ENCODE measurements at regions of chr4 and their contacts with region 1.

Region 1: DNA sequence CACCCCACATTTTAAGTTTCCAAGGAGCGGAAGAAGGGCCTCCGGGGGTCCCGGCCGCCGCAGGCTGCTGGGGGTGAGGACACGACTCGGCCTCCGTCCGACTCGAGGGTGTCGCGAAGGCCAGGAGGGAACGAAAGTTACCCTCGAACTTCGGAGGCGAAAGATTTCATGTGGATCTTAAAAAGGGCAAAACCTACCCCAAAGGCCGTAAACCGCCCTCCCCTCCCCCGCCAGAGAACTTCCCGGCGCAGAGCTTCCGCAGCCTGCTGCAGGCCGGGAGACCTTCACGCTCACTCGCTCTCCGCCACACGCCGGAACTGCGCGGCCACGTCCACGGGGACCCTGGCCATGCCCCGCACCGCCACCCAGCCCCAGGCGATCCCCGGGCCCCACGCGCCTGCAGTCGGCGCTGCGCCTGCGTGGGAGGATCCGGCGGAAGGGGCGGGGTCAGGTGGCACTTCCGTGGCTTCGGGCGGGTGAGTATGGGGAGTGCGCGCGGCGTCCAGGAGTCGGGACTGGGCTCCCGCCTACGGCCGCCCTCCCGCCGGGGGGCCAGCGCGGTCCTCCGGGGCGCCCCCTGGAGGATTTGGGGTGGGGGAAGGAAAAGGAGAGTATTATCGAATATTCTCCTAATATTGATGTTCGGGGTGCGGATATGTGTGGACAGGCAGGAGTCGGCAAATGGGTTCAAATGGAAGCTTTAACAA is at the start of gene MMAA:
- DNase-seq: peak; percentile 91 to 95 (median 93)
- H3K4me3 ChIP-seq: peak within 1 kb of the TSS; percentile 85 to 97
- H3K4me3 Mint-ChIP-seq: peak within 1 kb of the TSS; percentile 87 to 100 (median 98)
- H3K27ac ChIP-seq: peak within 1 kb of the TSS; percentile 95
- H3K27ac Mint-ChIP-seq: peak within 1 kb of the TSS; percentile 98 to 100 (median 99)
- H3K4me1 ChIP-seq: peaks cover 32% of the 10 kb centered on the region
- H3K4me1 Mint-ChIP-seq: peaks cover 31 to 54% (median 36%) of the 10 kb centered on the region in 4 donors
- H3K27me3 ChIP-seq: no peaks in the 10 kb centered on the region
- H3K27me3 Mint-ChIP-seq: peaks cover 0 to 1% of the 10 kb centered on the region in 2 donors
- total RNA-seq, gene MMAA: 11.8 to 12.0 TPM

Region 2: DNA sequence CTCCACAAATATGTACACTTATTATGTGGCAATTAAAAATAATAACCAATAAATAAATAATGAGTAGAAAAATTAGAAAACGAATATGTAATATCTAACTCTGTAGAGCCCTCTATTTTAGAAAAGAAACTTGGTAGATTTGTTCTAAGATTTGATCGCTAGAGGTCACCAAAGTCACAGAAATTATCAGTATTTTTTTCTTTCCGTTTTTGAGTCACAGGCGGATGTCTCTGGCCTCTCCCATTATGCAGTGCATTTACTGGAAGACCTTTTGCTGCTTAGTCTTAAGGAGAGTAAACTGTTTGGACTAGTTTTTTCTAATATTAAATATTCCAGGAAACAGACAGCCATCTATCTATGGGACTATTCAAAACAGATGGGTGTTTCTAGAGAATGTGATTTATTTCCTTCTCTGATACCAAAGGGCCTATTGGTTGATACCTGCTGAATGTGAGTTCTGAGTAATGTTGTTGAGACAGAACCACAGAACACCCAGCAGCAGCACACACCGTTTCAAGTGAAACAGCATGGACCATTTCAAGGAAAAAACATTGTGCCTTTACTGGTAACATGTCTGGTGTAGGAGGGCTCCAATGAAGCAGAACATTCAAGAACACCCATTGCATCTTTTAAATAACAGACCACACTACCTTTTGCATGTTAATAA is 1444.6 kb before region 1 on chr4:
- CTCF ChIA-PET with region 1: interaction called, 4 read pairs
- POLR2A ChIA-PET with region 1: no interaction called
- intact Hi-C with region 1: loop called (anchors 2 kb)
- DNase-seq: peak; percentile 29 to 48 (median 41)
- H3K4me3 ChIP-seq: no peak overlapping the region
- H3K4me3 Mint-ChIP-seq: no peak overlapping the region
- H3K27ac ChIP-seq: no peak overlapping the region
- H3K27ac Mint-ChIP-seq: no peak overlapping the region
- H3K4me1 ChIP-seq: no peaks in the 10 kb centered on the region
- H3K4me1 Mint-ChIP-seq: peaks cover 0 to 6% (median 3%) of the 10 kb centered on the region in 4 donors
- H3K27me3 ChIP-seq: no peaks in the 10 kb centered on the region
- H3K27me3 Mint-ChIP-seq: peaks cover 7 to 9% of the 10 kb centered on the region in 2 donors

Region 3: GRCh38 chr4:145154573-145154972 is 464.5 kb before region 1 on chr4:
- CTCF ChIA-PET with region 1: interaction called, 3 read pairs
- POLR2A ChIA-PET with region 1: no interaction called
- intact Hi-C with region 1: loop called (anchors 2 kb)
- DNase-seq: no peak
- H3K4me3 ChIP-seq: no peak overlapping the region
- H3K4me3 Mint-ChIP-seq: no peak overlapping the region
- H3K27ac ChIP-seq: no peak overlapping the region
- H3K27ac Mint-ChIP-seq: peak overlapping the region in 1 of 7 donors; percentile 34
- H3K4me1 ChIP-seq: no peaks in the 10 kb centered on the region
- H3K4me1 Mint-ChIP-seq: peaks cover 0 to 9% (median 4%) of the 10 kb centered on the region in 4 donors
- H3K27me3 ChIP-seq: no peaks in the 10 kb centered on the region
- H3K27me3 Mint-ChIP-seq: no peaks in the 10 kb centered on the region

Region 4: DNA sequence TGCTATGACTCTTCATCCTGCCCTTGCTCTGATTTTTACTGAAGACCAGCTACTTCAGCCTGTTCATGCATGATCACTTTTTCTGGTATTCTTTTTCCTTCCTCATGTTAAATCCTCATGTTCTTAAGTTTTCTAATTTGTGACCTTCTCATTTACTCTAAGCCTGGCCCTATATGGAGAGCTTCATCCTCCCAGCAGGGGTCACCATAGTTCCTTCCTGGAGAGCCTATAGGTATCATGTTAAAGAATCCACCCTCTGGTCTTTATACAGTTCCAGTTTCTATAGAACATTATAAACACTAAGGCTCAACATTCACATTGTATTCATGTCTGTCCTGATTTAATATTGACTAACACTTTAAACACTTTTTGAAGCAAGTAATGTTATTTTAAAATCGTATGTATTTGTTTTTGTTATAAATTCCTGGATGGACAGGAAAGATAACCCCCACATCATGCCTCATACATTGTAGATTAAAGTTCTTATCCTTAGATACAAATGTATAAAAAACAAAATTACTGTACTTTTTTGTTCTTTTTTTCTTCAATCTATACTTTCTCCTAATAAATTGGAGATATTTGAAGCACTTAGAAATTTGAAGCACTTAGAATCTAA is 384.9 kb before region 1 on chr4:
- CTCF ChIA-PET with region 1: interaction called, 29 read pairs
- POLR2A ChIA-PET with region 1: no interaction called
- intact Hi-C with region 1: no loop called
- DNase-seq: peak; percentile 31 to 55 (median 43)
- H3K4me3 ChIP-seq: no peak overlapping the region
- H3K4me3 Mint-ChIP-seq: no peak overlapping the region
- H3K27ac ChIP-seq: no peak overlapping the region
- H3K27ac Mint-ChIP-seq: no peak overlapping the region
- H3K4me1 ChIP-seq: no peaks in the 10 kb centered on the region
- H3K4me1 Mint-ChIP-seq: no peaks in the 10 kb centered on the region
- H3K27me3 ChIP-seq: no peaks in the 10 kb centered on the region
- H3K27me3 Mint-ChIP-seq: peaks cover 0 to 10% of the 10 kb centered on the region in 2 donors

Region 5: GRCh38 chr4:145732895-145733880 is 114.1 kb after region 1 on chr4:
- CTCF ChIA-PET with region 1: no interaction called
- POLR2A ChIA-PET with region 1: no interaction called
- intact Hi-C with region 1: loop called (anchors 1 kb)
- DNase-seq: peak; percentile 67 to 83 (median 69)
- H3K4me3 ChIP-seq: peak overlapping the region in 1 of 2 donors; percentile 45
- H3K4me3 Mint-ChIP-seq: peak overlapping the region; percentile 76 to 84 (median 81)
- H3K27ac ChIP-seq: peak overlapping the region; percentile 13
- H3K27ac Mint-ChIP-seq: peak overlapping the region in 5 of 7 donors; percentile 18 to 87 (median 52)
- H3K4me1 ChIP-seq: peaks cover 5% of the 10 kb centered on the region
- H3K4me1 Mint-ChIP-seq: peaks cover 4 to 31% (median 10%) of the 10 kb centered on the region in 4 donors
- H3K27me3 ChIP-seq: no peaks in the 10 kb centered on the region
- H3K27me3 Mint-ChIP-seq: peaks cover 9 to 10% of the 10 kb centered on the region in 2 donors

Region 6: GRCh38 chr4:146175541-146176453 is 556.7 kb after region 1 on chr4 and contains the start of gene LSM6:
- CTCF ChIA-PET with region 1: no interaction called
- POLR2A ChIA-PET with region 1: no interaction called
- intact Hi-C with region 1: loop called (anchors 5 kb)
- DNase-seq: peak; percentile 83 to 87 (median 84)
- H3K4me3 ChIP-seq: peak within 1 kb of the TSS; percentile 39 to 96
- H3K4me3 Mint-ChIP-seq: peak within 1 kb of the TSS; percentile 86 to 96 (median 92)
- H3K27ac ChIP-seq: peak within 1 kb of the TSS; percentile 81
- H3K27ac Mint-ChIP-seq: peak within 1 kb of the TSS; percentile 93 to 98 (median 97)
- H3K4me1 ChIP-seq: peaks cover 53% of the 10 kb centered on the region
- H3K4me1 Mint-ChIP-seq: peaks cover 34 to 63% (median 42%) of the 10 kb centered on the region in 4 donors
- H3K27me3 ChIP-seq: no peaks in the 10 kb centered on the region
- H3K27me3 Mint-ChIP-seq: no peaks in the 10 kb centered on the region
- total RNA-seq, gene LSM6: 47.7 to 54.0 TPM

Region 7: DNA sequence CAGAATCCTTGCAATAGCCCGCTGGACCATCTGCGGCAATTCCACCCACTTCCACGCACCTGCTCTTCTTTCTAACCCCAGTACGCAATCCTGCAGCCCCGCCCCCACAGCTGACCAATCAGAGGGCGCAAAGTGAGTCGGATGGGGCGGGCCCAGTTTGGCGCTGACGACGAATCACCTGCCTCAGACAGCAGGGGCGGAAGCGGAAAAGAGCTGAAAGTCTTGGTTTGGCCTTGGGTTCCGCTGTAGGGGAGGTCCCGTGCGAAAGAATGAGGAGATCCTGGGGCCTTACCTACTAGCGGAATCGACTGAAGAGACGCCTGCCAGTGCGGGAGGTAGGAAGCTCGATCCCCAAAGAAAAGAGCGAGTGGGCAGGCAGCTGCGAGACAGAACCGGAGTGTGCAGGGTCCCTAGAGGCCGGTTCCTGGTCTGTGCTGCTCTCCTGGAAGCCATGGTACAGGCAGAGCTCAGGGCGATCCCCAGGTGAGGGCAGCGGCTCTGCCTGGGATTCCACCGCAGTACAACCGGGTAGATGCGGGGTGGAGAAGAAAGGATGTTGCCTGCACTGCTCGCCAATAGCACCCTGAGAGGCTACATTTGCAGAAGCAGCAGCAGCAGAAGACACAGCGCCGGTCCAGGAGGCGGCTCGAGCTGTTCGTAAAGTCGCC is 1998.2 kb after region 1 on chr4 and contains the start of gene TMEM184C:
- CTCF ChIA-PET with region 1: no interaction called
- POLR2A ChIA-PET with region 1: interaction called, 3 read pairs
- intact Hi-C with region 1: loop called (anchors 5 kb)
- DNase-seq: peak; percentile 97 to 98 (median 98)
- H3K4me3 ChIP-seq: peak within 1 kb of the TSS; percentile 82 to 99
- H3K4me3 Mint-ChIP-seq: peak within 1 kb of the TSS; percentile 92 to 98 (median 96)
- H3K27ac ChIP-seq: peak within 1 kb of the TSS; percentile 93
- H3K27ac Mint-ChIP-seq: peak within 1 kb of the TSS; percentile 96 to 99 (median 97)
- H3K4me1 ChIP-seq: peaks cover 49% of the 10 kb centered on the region
- H3K4me1 Mint-ChIP-seq: peaks cover 22 to 51% (median 36%) of the 10 kb centered on the region in 4 donors
- H3K27me3 ChIP-seq: no peaks in the 10 kb centered on the region
- H3K27me3 Mint-ChIP-seq: peaks cover 0 to 1% of the 10 kb centered on the region in 2 donors
- total RNA-seq, gene TMEM184C: 28.8 to 31.5 TPM

Measured in CD4-positive, alpha-beta memory T cell (primary cell).